Ascending aorta (tissue), 2 donors: ENCODE measurements at regions of chr6 and their contacts with region 1.

Region 1: GRCh38 chr6:71468841-71469750 is 180.5 kb downstream of the OGFRL1 start:
- DNase-seq: peak in 1 of 2 donors; percentile 80
- H3K4me3 ChIP-seq: peak overlapping the region; percentile 7 to 46
- H3K27ac ChIP-seq: peak overlapping the region; percentile 74
- H3K4me1 ChIP-seq: peaks cover 0 to 10% of the 10 kb centered on the region in 2 donors
- H3K27me3 ChIP-seq: no peaks in the 10 kb centered on the region
- CTCF ChIP-seq: no peak

Region 2: DNA sequence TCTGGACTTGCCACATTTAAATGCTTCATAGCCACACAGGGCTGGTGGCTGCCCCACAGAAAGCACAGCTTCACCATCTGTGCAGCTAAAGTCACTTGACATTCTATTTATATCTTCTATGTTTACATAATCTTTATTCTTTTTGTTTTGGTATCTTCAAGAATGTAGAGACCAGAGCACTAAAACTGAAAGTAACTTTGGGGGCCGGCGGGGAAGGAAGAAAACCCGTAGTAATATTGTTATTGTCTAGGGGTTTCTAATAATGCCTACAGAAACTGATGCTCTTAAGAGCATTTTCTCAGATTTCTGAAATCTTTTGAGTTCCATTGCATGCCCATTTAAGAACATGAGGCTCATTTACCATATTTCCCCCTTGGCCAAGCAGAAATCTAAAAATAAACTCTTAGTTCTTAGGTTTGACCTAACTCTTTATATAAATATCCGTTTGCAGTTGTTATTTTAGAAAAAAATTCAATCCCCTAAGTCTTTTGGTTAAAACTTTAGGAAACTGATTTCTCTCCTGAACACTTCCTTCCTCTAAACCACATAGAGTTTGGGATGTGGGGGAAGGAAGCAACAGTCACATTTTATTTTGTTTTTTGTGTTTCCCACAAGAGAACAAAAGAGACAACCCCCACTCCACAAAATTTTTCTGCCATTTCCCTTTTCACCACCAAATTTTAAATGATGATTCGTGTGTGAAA is 27.1 kb after region 1 on chr6:
- intact Hi-C with region 1: loop called (anchors 2 kb)
- DNase-seq: no peak
- H3K4me3 ChIP-seq: peak overlapping the region; percentile 41 to 53
- H3K27ac ChIP-seq: peak overlapping the region; percentile 69 to 80
- H3K4me1 ChIP-seq: peaks cover 0 to 8% of the 10 kb centered on the region in 2 donors
- H3K27me3 ChIP-seq: no peaks in the 10 kb centered on the region
- CTCF ChIP-seq: no peak